ENCODE measurements at regions of chr16 and their contacts with region 1.

Region 1: GRCh38 chr16:11715246-11715947 is 27.3 kb downstream of the TXNDC11 start:
- DNase-seq: no peak
- ATAC-seq: no peak
- H3K4me3 ChIP-seq: no peak overlapping the region
- H3K4me3 Mint-ChIP-seq: no peak overlapping the region
- H3K27ac ChIP-seq: no peak overlapping the region
- H3K27ac Mint-ChIP-seq: no peak overlapping the region
- H3K4me1 ChIP-seq: no peaks in the 10 kb centered on the region
- H3K4me1 Mint-ChIP-seq: peaks cover 25% of the 10 kb centered on the region
- H3K27me3 ChIP-seq: no peaks in the 10 kb centered on the region
- H3K27me3 Mint-ChIP-seq: no peaks in the 10 kb centered on the region
- CTCF ChIP-seq: no peak

Region 2: DNA sequence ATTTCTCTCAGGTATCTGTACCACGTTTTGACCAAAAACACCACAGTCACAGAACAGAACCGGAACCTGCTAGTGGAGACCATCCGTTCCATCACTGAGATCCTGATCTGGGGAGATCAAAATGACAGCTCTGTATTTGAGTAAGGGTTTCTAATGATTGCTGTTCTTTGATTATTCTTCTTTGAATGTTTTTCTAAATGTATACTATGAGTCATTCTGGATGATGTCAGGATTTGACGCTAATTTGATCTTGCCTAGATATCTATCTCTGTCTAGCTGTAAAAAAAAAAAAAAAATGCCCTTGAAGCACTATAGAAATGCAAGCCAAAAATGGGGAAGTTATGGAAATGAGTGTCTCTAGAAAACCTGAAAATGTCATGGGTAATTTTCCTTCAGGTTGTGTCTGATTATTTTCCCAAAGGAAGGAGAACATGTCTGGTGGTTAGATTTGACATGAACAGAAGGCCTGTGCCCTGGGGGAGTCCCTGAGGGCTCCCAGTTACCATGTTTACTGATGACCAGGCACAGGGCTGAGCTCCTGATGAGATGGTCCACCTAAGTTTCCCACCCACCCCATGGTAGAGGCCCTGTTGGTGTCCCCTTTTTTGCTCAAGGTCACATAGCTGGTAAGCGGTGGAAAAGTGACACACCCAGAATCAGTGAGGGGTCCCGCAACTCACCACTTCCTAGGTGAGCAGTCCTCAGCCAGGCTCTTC is 757.5 kb before region 1 on chr16:
- CTCF ChIA-PET with region 1: interaction called, 19 read pairs
- POLR2A ChIA-PET with region 1: no interaction called
- intact Hi-C with region 1: loop called in 1 of 2 experiments (anchors 1 kb)
- DNase-seq: no peak
- ATAC-seq: peak; percentile 48
- H3K4me3 ChIP-seq: no peak overlapping the region
- H3K4me3 Mint-ChIP-seq: no peak overlapping the region
- H3K27ac ChIP-seq: no peak overlapping the region
- H3K27ac Mint-ChIP-seq: peak overlapping the region; percentile 47
- H3K4me1 ChIP-seq: peaks cover 14% of the 10 kb centered on the region
- H3K4me1 Mint-ChIP-seq: peaks cover 32% of the 10 kb centered on the region
- H3K27me3 ChIP-seq: no peaks in the 10 kb centered on the region
- H3K27me3 Mint-ChIP-seq: no peaks in the 10 kb centered on the region
- CTCF ChIP-seq: no peak

Region 3: GRCh38 chr16:11273721-11274324 is 441.6 kb before region 1 on chr16:
- CTCF ChIA-PET with region 1: no interaction called
- POLR2A ChIA-PET with region 1: no interaction called
- intact Hi-C with region 1: no loop called
- DNase-seq: no peak
- ATAC-seq: no peak
- H3K4me3 ChIP-seq: no peak overlapping the region
- H3K4me3 Mint-ChIP-seq: no peak overlapping the region
- H3K27ac ChIP-seq: no peak overlapping the region
- H3K27ac Mint-ChIP-seq: no peak overlapping the region
- H3K4me1 ChIP-seq: no peaks in the 10 kb centered on the region
- H3K4me1 Mint-ChIP-seq: no peaks in the 10 kb centered on the region
- H3K27me3 ChIP-seq: no peaks in the 10 kb centered on the region
- H3K27me3 Mint-ChIP-seq: no peaks in the 10 kb centered on the region
- CTCF ChIP-seq: no peak

Region 4: DNA sequence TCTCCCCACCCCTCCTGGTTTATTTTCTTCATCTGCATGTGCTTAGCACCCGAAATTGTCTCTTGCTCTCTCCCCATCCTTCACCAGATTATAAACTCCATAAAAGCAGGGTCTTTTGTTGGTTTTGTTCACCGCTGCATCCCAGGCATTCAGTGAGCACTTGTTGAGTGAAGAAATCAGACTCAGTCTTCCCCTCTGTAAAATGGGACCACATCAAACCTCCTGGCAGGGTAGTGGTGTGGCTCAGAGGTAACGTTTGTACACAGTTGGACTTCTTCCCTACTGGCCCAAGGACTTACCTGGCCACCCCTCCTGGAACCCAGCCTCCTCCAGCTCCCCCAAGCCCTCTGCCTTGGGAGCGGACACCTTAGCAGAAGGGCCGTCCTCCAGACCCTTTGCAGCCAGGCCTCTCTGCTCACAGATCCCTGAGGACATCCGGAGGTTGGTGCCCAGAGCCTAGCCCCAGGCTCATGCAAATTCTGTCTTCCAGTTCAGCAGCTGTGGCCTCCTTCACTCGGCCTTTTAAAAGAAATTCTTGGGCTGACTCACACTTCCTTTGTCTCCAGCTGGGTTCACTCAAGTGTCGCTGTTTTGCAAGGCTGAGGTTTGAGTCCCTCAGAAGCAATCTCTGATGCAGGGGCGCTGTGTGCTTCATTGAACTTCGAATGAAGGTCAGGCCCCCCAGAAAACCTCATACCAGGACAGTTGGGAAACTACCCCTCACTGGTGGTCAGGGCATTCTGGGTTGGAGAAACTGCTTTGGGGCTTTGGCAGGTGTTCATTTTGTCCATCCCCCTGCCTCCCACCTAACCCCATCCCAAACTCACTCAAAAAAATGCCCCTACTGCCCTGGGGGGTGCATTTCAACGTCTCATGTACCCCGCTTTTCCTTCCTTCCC is 387.0 kb before region 1 on chr16:
- CTCF ChIA-PET with region 1: no interaction called
- POLR2A ChIA-PET with region 1: no interaction called
- intact Hi-C with region 1: no loop called
- DNase-seq: peak; percentile 12 to 71 (median 54)
- ATAC-seq: peak; percentile 83
- H3K4me3 ChIP-seq: no peak overlapping the region
- H3K4me3 Mint-ChIP-seq: peak overlapping the region; percentile 63
- H3K27ac ChIP-seq: no peak overlapping the region
- H3K27ac Mint-ChIP-seq: peak overlapping the region; percentile 66
- H3K4me1 ChIP-seq: peaks cover 17% of the 10 kb centered on the region
- H3K4me1 Mint-ChIP-seq: peaks cover 26% of the 10 kb centered on the region
- H3K27me3 ChIP-seq: no peaks in the 10 kb centered on the region
- H3K27me3 Mint-ChIP-seq: no peaks in the 10 kb centered on the region
- CTCF ChIP-seq: no peak

Region 5: DNA sequence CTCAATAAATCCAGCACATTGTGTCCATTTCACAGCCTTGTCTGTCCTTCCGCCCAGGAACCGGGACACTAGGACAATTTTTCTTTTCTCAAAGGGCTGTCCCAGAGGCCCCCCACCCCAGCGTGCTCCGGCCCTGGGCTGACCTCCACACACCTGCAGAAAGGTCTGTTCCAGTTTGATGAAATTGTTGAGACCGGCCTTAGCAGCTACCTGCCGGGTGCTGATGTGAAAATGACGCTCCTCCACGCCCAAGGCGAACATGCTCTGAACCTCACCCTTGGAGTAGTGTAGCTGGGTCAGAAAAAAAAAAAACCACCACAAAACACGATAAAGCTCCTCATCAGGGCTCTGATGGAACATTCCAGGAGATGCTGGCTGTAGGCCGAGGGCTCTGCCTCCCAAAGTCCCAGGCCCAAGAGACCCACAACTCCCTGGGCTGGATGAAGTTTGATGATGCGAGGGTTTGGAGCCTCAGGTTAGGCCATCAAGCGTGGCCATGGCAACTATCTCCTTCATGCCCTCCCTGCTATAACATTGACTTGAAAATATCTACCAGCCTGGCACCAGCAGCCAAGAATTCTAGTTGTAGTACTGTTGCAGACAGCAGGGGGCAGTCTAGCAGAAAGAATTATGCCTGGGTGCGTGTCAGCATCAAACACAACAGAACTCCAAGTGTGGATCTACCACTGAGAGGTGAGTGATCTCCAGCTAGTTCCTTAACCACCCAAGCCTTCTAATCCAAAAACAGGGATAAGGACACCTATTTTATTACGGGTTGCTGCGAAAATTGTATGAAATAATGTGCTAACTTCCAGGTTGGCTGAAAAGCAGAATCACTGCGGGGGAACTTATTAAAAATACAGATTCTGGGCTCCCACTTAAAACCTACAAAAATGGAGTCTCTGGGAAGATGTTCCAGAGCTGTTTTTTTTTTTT is 308.1 kb before region 1 on chr16:
- CTCF ChIA-PET with region 1: interaction called, 103 read pairs
- POLR2A ChIA-PET with region 1: no interaction called
- intact Hi-C with region 1: loop called (anchors 1 kb)
- DNase-seq: peak; percentile 37 to 78 (median 61)
- ATAC-seq: peak; percentile 82
- H3K4me3 ChIP-seq: no peak overlapping the region
- H3K4me3 Mint-ChIP-seq: no peak overlapping the region
- H3K27ac ChIP-seq: no peak overlapping the region
- H3K27ac Mint-ChIP-seq: no peak overlapping the region
- H3K4me1 ChIP-seq: no peaks in the 10 kb centered on the region
- H3K4me1 Mint-ChIP-seq: no peaks in the 10 kb centered on the region
- H3K27me3 ChIP-seq: no peaks in the 10 kb centered on the region
- H3K27me3 Mint-ChIP-seq: no peaks in the 10 kb centered on the region
- CTCF ChIP-seq: peak; percentile 57

Region 6: DNA sequence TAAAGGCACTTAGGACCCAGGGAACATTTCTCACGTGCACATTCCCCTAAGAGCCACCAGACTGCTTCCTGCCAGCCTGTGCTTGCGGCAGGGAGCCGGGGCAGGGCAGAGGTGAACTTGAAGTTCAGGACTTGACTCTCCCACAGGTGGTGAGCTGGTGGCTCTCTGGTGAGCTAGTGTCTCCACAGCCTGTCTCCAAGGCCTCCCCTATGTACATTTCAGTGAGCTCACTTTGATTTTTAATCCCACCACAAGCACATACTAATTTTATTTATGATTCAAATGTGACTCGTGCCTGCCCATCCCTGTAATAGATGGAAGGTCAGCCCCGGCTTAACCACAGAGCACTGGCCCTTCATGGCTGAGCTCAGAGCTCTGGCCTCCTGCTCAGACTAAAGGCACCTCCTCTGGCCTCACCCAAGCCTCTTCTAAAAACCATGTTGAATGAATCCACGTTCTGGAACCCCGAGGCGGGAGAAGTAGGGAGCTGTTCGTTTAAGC is 37.9 kb before region 1 on chr16:
- CTCF ChIA-PET with region 1: interaction called, 15 read pairs
- POLR2A ChIA-PET with region 1: no interaction called
- intact Hi-C with region 1: no loop called
- DNase-seq: no peak
- ATAC-seq: no peak
- H3K4me3 ChIP-seq: no peak overlapping the region
- H3K4me3 Mint-ChIP-seq: no peak overlapping the region
- H3K27ac ChIP-seq: no peak overlapping the region
- H3K27ac Mint-ChIP-seq: peak overlapping the region; percentile 73
- H3K4me1 ChIP-seq: peaks cover 44% of the 10 kb centered on the region
- H3K4me1 Mint-ChIP-seq: peaks cover 75% of the 10 kb centered on the region
- H3K27me3 ChIP-seq: no peaks in the 10 kb centered on the region
- H3K27me3 Mint-ChIP-seq: no peaks in the 10 kb centered on the region
- CTCF ChIP-seq: no peak

Region 7: DNA sequence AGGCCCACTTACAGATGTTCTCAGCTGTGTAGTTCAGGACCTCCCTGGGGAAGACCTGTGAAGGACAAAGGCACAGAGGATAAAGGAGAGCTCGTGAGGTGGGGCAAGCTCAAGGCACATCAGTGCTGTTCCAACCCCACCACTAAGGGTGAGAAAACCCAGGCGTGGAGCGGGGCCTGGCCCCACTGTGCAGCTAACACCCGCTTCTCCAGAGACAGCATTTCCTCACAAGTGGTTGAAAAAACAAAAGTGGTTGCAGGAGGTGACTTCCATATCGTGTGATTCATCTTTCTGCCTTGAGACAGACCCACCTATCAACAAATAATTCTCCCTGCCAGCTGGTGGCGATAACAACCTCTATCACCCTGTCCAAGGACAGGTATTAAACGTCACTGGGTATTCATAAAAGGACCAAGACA is 17.1 kb before region 1 on chr16:
- CTCF ChIA-PET with region 1: interaction called, 14 read pairs
- POLR2A ChIA-PET with region 1: no interaction called
- intact Hi-C with region 1: no loop called
- DNase-seq: peak in 2 of 9 experiments; percentile 46 to 75
- ATAC-seq: peak; percentile 63
- H3K4me3 ChIP-seq: no peak overlapping the region
- H3K4me3 Mint-ChIP-seq: no peak overlapping the region
- H3K27ac ChIP-seq: no peak overlapping the region
- H3K27ac Mint-ChIP-seq: peak overlapping the region; percentile 45
- H3K4me1 ChIP-seq: peaks cover 12% of the 10 kb centered on the region
- H3K4me1 Mint-ChIP-seq: peaks cover 36% of the 10 kb centered on the region
- H3K27me3 ChIP-seq: no peaks in the 10 kb centered on the region
- H3K27me3 Mint-ChIP-seq: no peaks in the 10 kb centered on the region
- CTCF ChIP-seq: no peak

Region 8: GRCh38 chr16:11757671-11758545 is 42.5 kb after region 1 on chr16:
- CTCF ChIA-PET with region 1: no interaction called
- POLR2A ChIA-PET with region 1: no interaction called
- intact Hi-C with region 1: no loop called
- DNase-seq: no peak
- ATAC-seq: no peak
- H3K4me3 ChIP-seq: no peak overlapping the region
- H3K4me3 Mint-ChIP-seq: no peak overlapping the region
- H3K27ac ChIP-seq: no peak overlapping the region
- H3K27ac Mint-ChIP-seq: no peak overlapping the region
- H3K4me1 ChIP-seq: no peaks in the 10 kb centered on the region
- H3K4me1 Mint-ChIP-seq: no peaks in the 10 kb centered on the region
- H3K27me3 ChIP-seq: no peaks in the 10 kb centered on the region
- H3K27me3 Mint-ChIP-seq: no peaks in the 10 kb centered on the region
- CTCF ChIP-seq: no peak

Measured in CD8-positive, alpha-beta T cell (primary cell).